ENCODE measurements at regions of chr14 and their contacts with region 1.

Region 1: GRCh38 chr14:52299692-52300278 is 14.3 kb upstream of the PTGER2 start:
- H3K4me3 Mint-ChIP-seq: no peak overlapping the region
- H3K27ac Mint-ChIP-seq: no peak overlapping the region
- H3K4me1 Mint-ChIP-seq: peaks cover 24% of the 10 kb centered on the region
- H3K27me3 Mint-ChIP-seq: peaks cover 21% of the 10 kb centered on the region

Region 2: DNA sequence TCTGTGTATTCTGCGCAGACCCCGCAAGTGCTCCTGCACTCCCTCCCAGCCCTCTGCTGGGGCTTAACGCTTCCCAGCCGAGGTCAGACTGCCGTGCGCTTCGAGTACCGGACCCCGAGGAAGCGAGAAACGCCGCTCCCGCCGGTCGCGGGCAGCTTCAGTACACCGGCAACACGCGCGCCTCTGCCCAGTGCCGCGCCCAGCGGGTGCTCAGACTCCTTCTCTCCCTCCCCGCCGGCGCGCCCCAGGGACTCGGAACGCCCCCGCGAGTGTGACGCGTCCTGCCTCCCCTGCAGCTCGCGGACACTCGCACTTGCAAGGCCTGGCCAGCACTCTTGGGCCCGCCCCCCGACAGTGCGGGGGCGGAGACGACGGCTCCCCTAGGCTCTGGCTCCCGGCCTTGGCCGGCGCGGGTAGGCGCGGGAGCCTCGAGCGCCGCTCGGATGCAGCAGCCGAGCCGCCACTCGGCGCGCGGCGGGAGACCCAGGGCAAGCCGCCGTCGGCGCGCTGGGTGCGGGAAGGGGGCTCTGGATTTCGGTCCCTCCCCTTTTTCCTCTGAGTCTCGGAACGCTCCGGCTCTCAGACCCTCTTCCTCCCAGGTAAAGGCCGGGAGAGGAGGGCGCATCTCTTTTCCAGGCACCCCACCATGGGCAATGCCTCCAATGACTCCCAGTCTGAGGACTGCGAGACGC is 14.3 kb after region 1 on chr14 and contains the start of gene PTGER2:
- intact Hi-C with region 1: loop called (anchors 2 kb)
- H3K4me3 Mint-ChIP-seq: peak within 1 kb of the TSS; percentile 99
- H3K27ac Mint-ChIP-seq: peak within 1 kb of the TSS; percentile 98
- H3K4me1 Mint-ChIP-seq: peaks cover 75% of the 10 kb centered on the region
- H3K27me3 Mint-ChIP-seq: peaks cover 11% of the 10 kb centered on the region

Region 3: DNA sequence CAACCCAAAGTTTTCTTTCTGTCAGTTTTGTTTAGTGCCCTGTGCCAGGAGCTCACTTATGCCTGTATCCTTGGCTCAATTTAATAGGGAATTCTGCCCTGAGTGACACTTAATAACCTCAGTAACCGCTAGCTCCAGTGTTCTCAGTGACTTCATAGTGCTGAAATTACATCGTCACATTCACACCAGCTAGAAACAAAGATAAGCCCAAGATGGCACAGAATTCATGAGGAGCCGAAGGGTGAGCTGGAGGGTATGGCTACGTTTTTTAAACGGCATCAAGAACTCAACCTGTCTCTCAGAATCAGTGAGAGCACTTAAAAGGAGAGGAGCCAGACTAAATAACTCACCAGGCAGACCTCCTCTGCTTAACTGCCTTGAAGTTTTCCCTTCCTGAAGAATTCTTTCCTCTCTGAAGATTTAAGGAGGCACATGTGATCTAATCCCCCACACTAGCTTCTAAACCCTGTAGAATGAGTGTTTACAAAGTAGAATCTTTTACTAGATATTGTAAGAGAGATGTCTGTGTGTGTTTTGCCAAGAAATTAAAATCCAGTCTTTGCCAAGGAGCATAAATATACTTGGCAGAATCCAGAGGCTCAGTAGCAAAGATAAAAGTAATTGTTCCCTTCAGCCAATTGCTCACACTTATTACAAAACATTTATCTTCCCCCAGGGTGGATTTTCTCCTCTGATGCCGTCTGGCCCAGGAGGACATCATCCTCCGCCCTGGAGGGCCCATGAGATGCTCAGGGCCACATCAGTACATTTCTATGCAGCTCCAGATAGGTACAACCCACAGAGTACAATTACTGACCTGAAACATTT is 51.7 kb after region 1 on chr14:
- intact Hi-C with region 1: loop called (anchors 5 kb)
- H3K4me3 Mint-ChIP-seq: no peak overlapping the region
- H3K27ac Mint-ChIP-seq: no peak overlapping the region
- H3K4me1 Mint-ChIP-seq: peaks cover 22% of the 10 kb centered on the region
- H3K27me3 Mint-ChIP-seq: peaks cover 83% of the 10 kb centered on the region

Region 4: DNA sequence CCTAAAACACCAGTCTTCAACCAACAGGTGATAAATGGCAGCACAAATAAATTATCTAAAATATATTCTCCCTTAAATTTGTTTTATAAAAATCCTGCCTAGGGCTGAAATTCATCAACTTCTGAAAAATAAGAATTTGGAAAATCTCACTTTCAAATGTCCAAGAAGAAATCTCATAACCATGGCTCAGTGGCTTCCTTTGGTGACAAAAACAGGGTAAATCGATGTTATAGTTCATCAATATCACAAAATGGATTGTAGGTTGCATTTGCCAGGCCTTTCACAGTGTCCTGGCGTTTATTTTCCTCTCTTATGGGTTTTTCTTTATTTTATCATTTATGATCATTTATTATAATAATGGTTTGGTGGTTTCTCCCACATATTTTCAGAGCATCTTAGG is 117.4 kb after region 1 on chr14:
- intact Hi-C with region 1: loop called (anchors 5 kb)
- H3K4me3 Mint-ChIP-seq: no peak overlapping the region
- H3K27ac Mint-ChIP-seq: no peak overlapping the region
- H3K4me1 Mint-ChIP-seq: no peaks in the 10 kb centered on the region
- H3K27me3 Mint-ChIP-seq: peaks cover 37% of the 10 kb centered on the region

Region 5: GRCh38 chr14:52473557-52473956 is 173.8 kb after region 1 on chr14:
- intact Hi-C with region 1: loop called (anchors 1 kb)
- H3K4me3 Mint-ChIP-seq: no peak overlapping the region
- H3K27ac Mint-ChIP-seq: no peak overlapping the region
- H3K4me1 Mint-ChIP-seq: peaks cover 28% of the 10 kb centered on the region
- H3K27me3 Mint-ChIP-seq: no peaks in the 10 kb centered on the region

Measured in dendritic cell treated with granulocyte-macrophage colony-stimulating factor and Interleukin-4, amounts not matched to agents 40 ng/mL and 50 ng/mL, for 4 days (primary cell).